Heart left ventricle (tissue), 16 donors: ENCODE measurements at regions of chr16 and their contacts with region 1.

Region 1: GRCh38 chr16:78503602-78504001 is 404.1 kb downstream of the WWOX start:
- DNase-seq: peak in 2 of 5 donors; percentile 53 to 62
- ATAC-seq: no peak
- H3K4me3 ChIP-seq: no peak overlapping the region
- H3K27ac ChIP-seq: no peak overlapping the region
- H3K4me1 ChIP-seq: peaks cover 0 to 41% (median 10%) of the 10 kb centered on the region in 12 donors
- H3K27me3 ChIP-seq: no peaks in the 10 kb centered on the region
- CTCF ChIP-seq: peak; percentile 83 to 92 (median 89)
- POLR2A ChIP-seq: no peak

Region 2: DNA sequence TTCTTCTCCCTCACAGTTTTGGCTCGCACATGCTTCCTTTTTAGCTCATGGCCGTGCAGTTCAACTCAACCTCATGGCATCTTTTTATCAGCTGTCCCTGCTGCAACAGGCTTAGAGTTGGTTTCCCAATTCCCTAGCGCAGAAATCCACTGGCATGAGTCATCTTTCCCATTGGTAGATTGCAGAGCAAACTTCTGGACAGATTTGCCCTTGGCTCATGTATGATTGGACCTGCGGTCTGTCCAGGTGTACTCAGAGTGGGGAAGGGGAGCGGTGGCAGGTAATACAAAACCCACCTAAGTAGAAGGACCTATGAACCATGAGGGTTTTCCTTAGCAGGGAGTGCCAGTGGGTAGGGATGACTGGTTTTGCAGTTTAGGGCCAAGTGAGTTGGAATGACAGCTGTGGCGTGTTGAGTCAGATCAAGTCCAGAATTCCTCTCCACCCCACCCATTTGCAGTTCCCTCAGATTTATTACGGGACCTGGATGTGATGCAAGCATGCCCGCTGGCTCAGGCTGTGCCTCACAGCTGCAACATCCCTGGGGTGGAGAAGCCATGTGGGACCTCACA is 180.5 kb after region 1 on chr16:
- intact Hi-C with region 1: loop called in 3 of 10 experiments (anchors 10 kb)
- DNase-seq: peak; percentile 31 to 82 (median 73)
- ATAC-seq: peak; percentile 28 to 85 (median 78)
- H3K4me3 ChIP-seq: no peak overlapping the region
- H3K27ac ChIP-seq: peak overlapping the region in 10 of 12 donors; percentile 22 to 66 (median 53)
- H3K4me1 ChIP-seq: peaks cover 0 to 37% (median 2%) of the 10 kb centered on the region in 12 donors
- H3K27me3 ChIP-seq: no peaks in the 10 kb centered on the region
- CTCF ChIP-seq: no peak
- POLR2A ChIP-seq: no peak

Region 3: DNA sequence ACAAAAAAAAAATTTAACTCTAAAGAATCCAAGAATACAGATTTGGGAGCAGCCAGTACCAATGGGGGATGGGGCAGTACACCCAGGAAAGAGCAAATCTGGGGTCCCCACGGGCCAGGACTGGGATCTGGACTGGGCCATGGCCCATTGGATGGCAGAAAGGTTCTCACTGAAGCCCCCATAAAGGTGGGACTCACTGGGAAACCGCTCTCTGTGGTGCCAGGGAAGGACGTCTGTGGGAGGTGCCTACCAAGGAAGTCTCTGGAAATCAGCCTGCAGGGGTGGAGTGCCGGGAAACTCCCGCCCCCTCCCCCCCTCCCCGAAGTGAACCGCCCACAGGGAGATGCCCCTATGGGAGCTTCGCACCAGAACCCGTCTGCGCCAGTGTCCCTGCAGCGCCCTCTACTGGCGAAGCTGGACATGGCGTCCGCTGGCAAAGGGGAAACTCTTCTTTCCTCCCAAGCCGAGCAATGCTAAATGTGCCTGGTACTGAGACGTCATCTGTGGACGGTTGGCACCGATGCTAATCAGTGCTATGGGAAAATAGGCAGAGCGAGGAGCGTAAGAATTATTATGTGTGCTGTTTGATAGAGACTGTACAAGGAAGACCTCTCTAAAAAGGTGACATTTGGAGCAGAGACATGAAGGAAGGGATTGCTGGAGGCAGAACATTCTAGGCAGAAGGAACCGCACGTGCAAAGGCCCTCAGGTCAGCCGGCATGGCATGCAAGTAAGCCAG is 266.9 kb after region 1 on chr16:
- intact Hi-C with region 1: loop called (anchors 1 to 5 kb)
- DNase-seq: peak; percentile 70 to 90 (median 77)
- ATAC-seq: peak; percentile 75 to 88 (median 83)
- H3K4me3 ChIP-seq: no peak overlapping the region
- H3K27ac ChIP-seq: peak overlapping the region in 1 of 12 donors; percentile 37
- H3K4me1 ChIP-seq: peaks cover 0 to 19% (median 5%) of the 10 kb centered on the region in 12 donors
- H3K27me3 ChIP-seq: no peaks in the 10 kb centered on the region
- CTCF ChIP-seq: peak; percentile 78 to 97 (median 90)
- POLR2A ChIP-seq: no peak

Region 4: GRCh38 chr16:79261481-79261940 is 757.9 kb after region 1 on chr16:
- intact Hi-C with region 1: loop called in 2 of 10 experiments (anchors 5 to 10 kb)
- DNase-seq: peak; percentile 35 to 80 (median 57)
- ATAC-seq: peak; percentile 38 to 63 (median 54)
- H3K4me3 ChIP-seq: no peak overlapping the region
- H3K27ac ChIP-seq: peak overlapping the region in 4 of 12 donors; percentile 11 to 46 (median 22)
- H3K4me1 ChIP-seq: peaks cover 0 to 28% (median 8%) of the 10 kb centered on the region in 12 donors
- H3K27me3 ChIP-seq: peaks cover 0 to 6% (median 0%) of the 10 kb centered on the region in 9 donors
- CTCF ChIP-seq: peak; percentile 29 to 68 (median 50)
- POLR2A ChIP-seq: no peak

Region 5: GRCh38 chr16:80084685-80085084 is 1581.1 kb after region 1 on chr16:
- intact Hi-C with region 1: loop called in 5 of 10 experiments (anchors 10 kb)
- DNase-seq: peak in 4 of 5 donors; percentile 32 to 43 (median 38)
- ATAC-seq: peak; percentile 67 to 96 (median 92)
- H3K4me3 ChIP-seq: no peak overlapping the region
- H3K27ac ChIP-seq: no peak overlapping the region
- H3K4me1 ChIP-seq: peaks cover 0 to 5% (median 0%) of the 10 kb centered on the region in 12 donors
- H3K27me3 ChIP-seq: no peaks in the 10 kb centered on the region
- CTCF ChIP-seq: peak; percentile 43 to 76 (median 66)
- POLR2A ChIP-seq: no peak